K562 (cell line): ENCODE measurements at regions of chr15 and their contacts with region 1.

Region 1: DNA sequence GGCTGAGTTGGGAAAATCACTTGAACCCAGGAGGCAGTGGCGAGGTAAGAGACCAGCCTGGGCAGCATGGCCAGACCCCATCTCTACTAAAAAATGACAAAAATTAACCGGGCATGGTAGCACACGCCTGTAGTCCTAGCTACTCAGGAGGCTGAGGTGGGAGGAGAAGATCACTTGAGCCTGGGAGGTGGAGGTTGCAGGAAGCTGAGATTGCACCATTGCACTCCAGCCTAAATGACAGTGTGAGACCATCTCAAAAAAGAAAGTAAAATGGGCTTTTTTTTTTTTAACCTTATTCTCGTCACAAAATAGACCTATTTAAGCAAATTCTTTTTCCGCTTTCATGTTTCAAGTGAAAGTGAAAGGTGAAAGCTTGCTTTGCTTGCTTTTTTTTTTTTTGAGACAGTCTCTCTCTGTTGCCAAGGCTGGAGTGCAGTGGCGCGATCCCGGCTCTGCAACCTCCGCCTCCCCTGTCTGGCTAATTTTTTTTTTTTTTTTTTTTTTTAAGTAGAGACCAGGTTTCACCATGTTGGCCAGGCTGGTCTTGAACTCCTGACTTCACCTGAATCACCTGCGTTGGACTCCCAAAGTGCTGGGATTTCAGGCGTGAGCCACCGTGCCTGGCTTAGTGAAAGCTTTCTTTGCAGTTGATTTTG is 3.6 kb downstream of the PDIA3 start:
- DNase-seq: no peak
- ATAC-seq: no peak
- H3K4me3 ChIP-seq: no peak overlapping the region
- H3K27ac ChIP-seq: no peak overlapping the region
- H3K4me1 ChIP-seq: peaks cover 8% of the 10 kb centered on the region in 2 experiments; a peak in 4 of 5 replicates
- H3K27me3 ChIP-seq: no peaks in the 10 kb centered on the region
- CTCF ChIP-seq: no peak
- EP300 ChIP-seq: no peak
- POLR2A ChIP-seq: no peak
- RAD21 ChIP-seq: no peak

Region 2: DNA sequence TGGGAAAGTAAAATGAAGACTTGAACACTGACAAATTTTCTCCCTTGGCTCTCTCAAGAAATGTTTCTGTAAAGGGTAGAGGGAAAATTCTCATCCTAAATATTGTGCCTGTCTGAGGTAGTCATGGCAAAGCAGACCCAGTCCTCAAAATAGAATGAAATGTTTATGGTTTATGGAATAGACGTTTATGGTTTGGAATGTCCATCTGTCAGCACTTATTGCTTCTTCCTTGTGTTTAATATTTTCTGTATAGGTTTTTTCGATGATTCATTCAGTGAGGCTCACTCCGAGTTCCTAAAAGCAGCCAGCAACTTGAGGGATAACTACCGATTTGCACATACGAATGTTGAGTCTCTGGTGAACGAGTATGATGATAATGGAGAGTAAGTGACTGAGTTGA is 13.0 kb after region 1 on chr15:
- CTCF ChIA-PET with region 1: no interaction called
- POLR2A ChIA-PET with region 1: interaction called, 10 read pairs
- in situ Hi-C with region 1: no loop called
- intact Hi-C with region 1: no loop called
- DNase-seq: peak in 1 of 4 experiments; percentile 4
- ATAC-seq: no peak
- H3K4me3 ChIP-seq: no peak overlapping the region
- H3K27ac ChIP-seq: no peak overlapping the region
- H3K4me1 ChIP-seq: no peaks in the 10 kb centered on the region
- H3K27me3 ChIP-seq: no peaks in the 10 kb centered on the region
- CTCF ChIP-seq: no peak
- EP300 ChIP-seq: no peak
- POLR2A ChIP-seq: no peak
- RAD21 ChIP-seq: no peak

Region 3: GRCh38 chr15:43776718-43777583 is 27.1 kb after region 1 on chr15 and contains the start of gene ELL3:
- CTCF ChIA-PET with region 1: no interaction called
- POLR2A ChIA-PET with region 1: interaction called, 12 read pairs
- in situ Hi-C with region 1: no loop called
- intact Hi-C with region 1: no loop called
- DNase-seq: peak; percentile 44 to 63 (median 61)
- ATAC-seq: peak; percentile 74
- H3K4me3 ChIP-seq: peak within 1 kb of the TSS; percentile 32
- H3K27ac ChIP-seq: peak within 1 kb of the TSS; percentile 70
- H3K4me1 ChIP-seq: peaks cover 3 to 19% of the 10 kb centered on the region in 2 experiments; a peak in 4 of 5 replicates
- H3K27me3 ChIP-seq: no peaks in the 10 kb centered on the region
- CTCF ChIP-seq: peak; percentile 39 to 61 (median 41); a peak in 5 of 6 replicates
- EP300 ChIP-seq: no peak
- POLR2A ChIP-seq: peak; percentile 50; the same call in 1 of the 2 replicates
- RAD21 ChIP-seq: no peak
- polyA plus RNA-seq, gene ELL3: 2.9 to 3.6 TPM